HepG2 (cell line): ENCODE measurements at regions of chr2 and their contacts with region 1.

Region 1: DNA sequence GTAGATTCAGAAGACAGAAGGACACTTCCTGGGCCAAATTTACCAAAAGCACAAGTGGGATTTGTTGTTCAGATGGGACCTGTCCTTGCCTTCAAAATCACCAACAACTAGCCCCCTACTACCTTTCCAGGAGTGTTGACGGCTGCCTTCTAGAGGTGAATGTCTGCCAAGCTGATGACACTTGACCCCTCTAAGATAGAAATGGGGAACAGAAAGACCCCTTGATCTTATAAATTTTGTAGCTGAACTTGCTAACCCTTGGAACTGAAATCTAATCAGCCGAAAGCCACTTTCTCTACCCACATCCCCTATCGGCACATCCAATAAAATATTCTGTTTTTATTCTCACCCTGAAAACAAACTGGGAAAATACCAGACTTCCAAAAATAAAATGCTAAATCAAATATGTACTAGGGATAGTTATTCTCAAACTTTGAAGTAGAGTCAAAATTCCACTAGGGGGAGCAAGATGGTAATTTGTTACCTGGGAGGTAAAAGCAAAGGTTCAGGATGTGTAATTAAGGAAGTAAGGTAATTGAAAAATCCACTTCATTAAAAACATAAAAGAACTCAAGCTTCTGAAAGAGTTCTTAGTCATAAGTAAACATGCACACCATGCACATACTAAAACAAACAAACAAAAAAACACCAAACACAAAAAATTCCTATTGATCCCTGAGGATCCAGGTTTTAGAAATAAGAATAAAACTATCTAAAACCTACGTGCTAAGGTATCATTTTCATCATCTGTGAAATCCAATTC is 119.2 kb downstream of the ANKRD44 start:
- DNase-seq: peak; percentile 40
- ATAC-seq: peak; percentile 60; the same call in 2 of the 3 replicates
- H3K4me3 ChIP-seq: no peak overlapping the region
- H3K27ac ChIP-seq: no peak overlapping the region
- H3K4me1 ChIP-seq: no peaks in the 10 kb centered on the region
- H3K27me3 ChIP-seq: no peaks in the 10 kb centered on the region
- CTCF ChIP-seq: peak; percentile 66
- EP300 ChIP-seq: no peak
- POLR2A ChIP-seq: no peak
- RAD21 ChIP-seq: no peak

Region 2: GRCh38 chr2:195945061-195945460 is 1246.3 kb before region 1 on chr2:
- CTCF ChIA-PET with region 1: no interaction called
- POLR2A ChIA-PET with region 1: no interaction called
- in situ Hi-C with region 1: no loop called
- intact Hi-C with region 1: loop called (anchors 5 kb)
- DNase-seq: no peak
- ATAC-seq: no peak
- H3K4me3 ChIP-seq: no peak overlapping the region
- H3K27ac ChIP-seq: no peak overlapping the region
- H3K4me1 ChIP-seq: no peaks in the 10 kb centered on the region
- H3K27me3 ChIP-seq: no peaks in the 10 kb centered on the region
- CTCF ChIP-seq: no peak
- EP300 ChIP-seq: no peak
- POLR2A ChIP-seq: no peak
- RAD21 ChIP-seq: no peak

Region 3: GRCh38 chr2:197310987-197311420 is 119.6 kb after region 1 on chr2:
- CTCF ChIA-PET with region 1: no interaction called
- POLR2A ChIA-PET with region 1: no interaction called
- in situ Hi-C with region 1: no loop called
- intact Hi-C with region 1: loop called (anchors 1 kb)
- DNase-seq: no peak
- ATAC-seq: no peak
- H3K4me3 ChIP-seq: peak overlapping the region in 2 of 3 experiments; percentile 34 to 76; a peak in 4 of 6 replicates
- H3K27ac ChIP-seq: no peak overlapping the region
- H3K4me1 ChIP-seq: peaks cover 11% of the 10 kb centered on the region
- H3K27me3 ChIP-seq: peaks cover 0 to 57% of the 10 kb centered on the region in 2 experiments; a peak in 4 of 5 replicates
- CTCF ChIP-seq: no peak
- EP300 ChIP-seq: no peak
- POLR2A ChIP-seq: no peak
- RAD21 ChIP-seq: no peak